HCT116 (cell line): ENCODE measurements at regions of chr6 and their contacts with region 1.

Region 1: GRCh38 chr6:25263657-25264056 is 15.5 kb upstream of the CARMIL1 start:
- DNase-seq: no peak
- ATAC-seq: no peak
- H3K4me3 ChIP-seq: no peak overlapping the region
- H3K27ac ChIP-seq: no peak overlapping the region
- H3K4me1 ChIP-seq: no peaks in the 10 kb centered on the region
- H3K27me3 ChIP-seq: no peaks in the 10 kb centered on the region
- CTCF ChIP-seq: no peak
- POLR2A ChIP-seq: no peak
- RAD21 ChIP-seq: no peak

Region 2: DNA sequence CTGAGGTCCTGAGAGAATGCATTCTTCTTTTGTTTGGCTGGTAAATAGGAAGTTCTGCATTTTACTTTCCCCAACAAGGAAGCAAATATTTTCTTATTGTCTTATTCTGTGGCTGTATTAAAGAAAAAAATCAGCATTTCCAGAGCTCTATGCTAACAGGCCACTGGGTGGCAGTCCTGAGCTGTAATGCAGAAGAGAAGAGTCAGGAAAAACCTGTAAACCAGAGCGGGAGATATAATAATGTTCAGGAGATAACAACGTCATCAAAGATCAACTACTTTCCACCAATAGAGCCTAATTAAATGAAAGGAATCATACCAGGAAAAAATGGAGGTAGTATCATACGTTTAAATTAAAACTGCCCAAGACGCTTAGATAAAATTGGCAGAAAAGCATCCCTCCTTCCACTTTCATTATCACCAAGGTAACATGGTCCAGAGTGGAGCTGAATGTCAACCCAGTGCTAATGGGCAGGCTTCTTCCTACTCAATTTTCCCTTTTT is 40.1 kb before region 1 on chr6:
- CTCF ChIA-PET with region 1: interaction called, 13 read pairs
- POLR2A ChIA-PET with region 1: no interaction called
- RAD21 ChIA-PET with region 1: interaction called, 3 to 6 read pairs
- intact Hi-C with region 1: no loop called
- DNase-seq: peak; percentile 61
- ATAC-seq: peak; percentile 80
- H3K4me3 ChIP-seq: peak overlapping the region; percentile 18 to 23; a peak in 3 of 4 replicates
- H3K27ac ChIP-seq: no peak overlapping the region
- H3K4me1 ChIP-seq: no peaks in the 10 kb centered on the region; a peak in 1 of 4 replicates
- H3K27me3 ChIP-seq: no peaks in the 10 kb centered on the region
- CTCF ChIP-seq: peak; percentile 76 to 95 (median 89)
- POLR2A ChIP-seq: no peak
- RAD21 ChIP-seq: peak; percentile 93

Region 3: DNA sequence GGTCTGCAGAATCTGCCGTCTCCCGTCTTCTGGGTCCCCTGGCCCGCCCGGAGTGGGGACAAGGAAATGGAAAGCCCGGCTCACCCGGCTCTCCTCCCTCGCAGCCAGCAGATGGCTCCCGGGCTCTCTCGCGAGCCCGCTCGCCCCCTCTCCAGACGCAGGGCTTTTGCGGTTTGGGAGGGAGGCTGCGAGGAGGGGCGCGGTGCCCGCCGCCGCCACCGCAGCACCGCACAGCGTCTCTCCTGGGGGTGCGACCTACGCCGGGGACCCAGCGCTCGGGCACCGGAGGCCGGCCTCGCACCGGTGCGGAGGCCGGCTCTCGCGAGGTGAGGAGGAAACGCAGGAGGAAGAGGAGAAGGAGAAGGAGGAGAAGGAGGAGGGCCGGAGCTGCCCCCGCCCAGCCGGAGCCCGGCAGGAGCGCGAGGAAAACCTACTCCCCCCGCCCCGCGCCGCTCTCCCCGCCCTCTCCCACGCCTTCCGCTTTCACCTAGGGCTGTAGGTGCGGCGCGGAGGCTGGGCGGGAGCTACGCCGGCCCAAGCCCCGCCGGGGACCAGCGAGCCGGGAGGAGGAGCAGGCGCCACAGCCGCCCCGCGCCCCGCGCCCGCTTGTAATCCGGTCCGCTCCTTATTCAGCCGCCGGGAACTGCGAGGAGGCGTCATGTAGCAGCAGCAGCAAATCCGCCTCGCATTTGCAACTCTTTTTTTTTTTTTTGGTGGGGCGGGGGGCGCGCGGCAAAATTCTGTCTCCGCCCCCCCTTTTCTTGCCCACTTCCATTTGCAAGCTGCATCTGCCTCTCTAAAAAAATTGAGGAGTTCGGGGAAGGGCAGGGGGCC is 15.5 kb after region 1 on chr6 and contains the start of gene CARMIL1:
- CTCF ChIA-PET with region 1: interaction called, 19 read pairs
- POLR2A ChIA-PET with region 1: interaction called, 3 read pairs
- RAD21 ChIA-PET with region 1: interaction called, 3 to 5 read pairs
- intact Hi-C with region 1: no loop called
- DNase-seq: peak; percentile 73
- ATAC-seq: peak; percentile 91
- H3K4me3 ChIP-seq: peak within 1 kb of the TSS; percentile 72 to 87
- H3K27ac ChIP-seq: peak within 1 kb of the TSS; percentile 65
- H3K4me1 ChIP-seq: peaks cover 13 to 24% of the 10 kb centered on the region in 2 experiments
- H3K27me3 ChIP-seq: no peaks in the 10 kb centered on the region
- CTCF ChIP-seq: peak; percentile 51 to 83 (median 56); a peak in 4 of 6 replicates
- POLR2A ChIP-seq: peak; percentile 58
- RAD21 ChIP-seq: peak; percentile 86
- total RNA-seq, gene CARMIL1: 21.7 TPM

Region 4: GRCh38 chr6:25490018-25490801 is 226.6 kb after region 1 on chr6:
- CTCF ChIA-PET with region 1: interaction called, 42 read pairs
- POLR2A ChIA-PET with region 1: interaction called, 4 read pairs
- RAD21 ChIA-PET with region 1: interaction called, 6 to 9 read pairs
- intact Hi-C with region 1: loop called (anchors 1 kb)
- DNase-seq: peak; percentile 69
- ATAC-seq: peak; percentile 98
- H3K4me3 ChIP-seq: no peak overlapping the region
- H3K27ac ChIP-seq: no peak overlapping the region
- H3K4me1 ChIP-seq: peaks cover 0 to 16% of the 10 kb centered on the region in 2 experiments; a peak in 1 of 4 replicates
- H3K27me3 ChIP-seq: no peaks in the 10 kb centered on the region
- CTCF ChIP-seq: peak; percentile 83 to 84 (median 84)
- POLR2A ChIP-seq: no peak
- RAD21 ChIP-seq: peak; percentile 88

Region 5: GRCh38 chr6:25556516-25556915 is 292.9 kb after region 1 on chr6:
- CTCF ChIA-PET with region 1: interaction called, 31 read pairs
- POLR2A ChIA-PET with region 1: no interaction called
- RAD21 ChIA-PET with region 1: interaction called in 1 of 2 experiments, 3 read pairs
- intact Hi-C with region 1: loop called (anchors 1 kb)
- DNase-seq: peak; percentile 71
- ATAC-seq: peak; percentile 87
- H3K4me3 ChIP-seq: no peak overlapping the region
- H3K27ac ChIP-seq: no peak overlapping the region
- H3K4me1 ChIP-seq: no peaks in the 10 kb centered on the region
- H3K27me3 ChIP-seq: no peaks in the 10 kb centered on the region
- CTCF ChIP-seq: peak; percentile 56 to 89 (median 79)
- POLR2A ChIP-seq: no peak
- RAD21 ChIP-seq: peak; percentile 65

Region 6: DNA sequence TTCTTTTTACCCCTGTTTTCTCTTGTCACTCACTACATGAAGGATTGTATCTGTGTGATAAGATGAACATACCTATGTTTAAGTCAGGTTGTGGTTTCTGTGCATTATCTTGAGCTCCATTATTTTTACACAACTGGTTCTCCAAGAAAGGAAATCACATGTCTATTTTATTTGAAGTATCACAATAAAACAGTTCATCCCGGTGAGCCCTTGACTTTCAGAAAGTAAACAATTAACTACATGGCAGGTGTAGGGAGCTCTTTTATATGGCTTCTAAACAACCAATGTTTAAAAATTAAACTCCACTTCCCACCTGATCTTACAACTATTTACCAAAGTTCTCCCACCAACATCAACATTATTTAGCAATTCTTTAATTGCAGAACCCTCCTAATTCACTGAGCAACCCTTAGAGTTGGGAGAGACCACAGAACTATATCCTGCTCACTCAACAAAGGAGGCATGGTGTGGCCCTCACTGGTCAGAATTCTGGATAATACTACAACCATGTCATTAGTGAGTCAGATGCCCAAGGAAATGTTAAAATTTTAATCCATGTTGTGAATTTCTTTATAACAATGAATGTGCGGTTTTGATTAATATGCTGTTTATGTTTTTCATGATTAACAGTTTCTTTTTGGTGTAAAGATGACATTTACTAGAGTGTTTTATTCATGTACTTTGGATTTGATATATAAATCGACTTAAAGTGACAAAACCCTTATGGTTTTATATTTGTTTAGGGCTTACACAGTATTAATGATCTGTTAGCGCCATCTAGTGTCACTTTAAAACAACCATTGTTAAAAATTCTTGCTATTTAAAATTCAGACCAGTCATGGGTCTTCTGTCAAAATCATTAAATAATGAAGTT is 338.4 kb after region 1 on chr6:
- CTCF ChIA-PET with region 1: interaction called, 9 read pairs
- POLR2A ChIA-PET with region 1: no interaction called
- RAD21 ChIA-PET with region 1: no interaction called
- intact Hi-C with region 1: loop called (anchors 1 kb)
- DNase-seq: peak; percentile 28
- ATAC-seq: no peak; the same call in 1 of the 2 replicates
- H3K4me3 ChIP-seq: no peak overlapping the region
- H3K27ac ChIP-seq: no peak overlapping the region
- H3K4me1 ChIP-seq: no peaks in the 10 kb centered on the region
- H3K27me3 ChIP-seq: no peaks in the 10 kb centered on the region
- CTCF ChIP-seq: peak; percentile 28 to 75 (median 67); a peak in 4 of 6 replicates
- POLR2A ChIP-seq: no peak
- RAD21 ChIP-seq: peak; percentile 74

Region 7: DNA sequence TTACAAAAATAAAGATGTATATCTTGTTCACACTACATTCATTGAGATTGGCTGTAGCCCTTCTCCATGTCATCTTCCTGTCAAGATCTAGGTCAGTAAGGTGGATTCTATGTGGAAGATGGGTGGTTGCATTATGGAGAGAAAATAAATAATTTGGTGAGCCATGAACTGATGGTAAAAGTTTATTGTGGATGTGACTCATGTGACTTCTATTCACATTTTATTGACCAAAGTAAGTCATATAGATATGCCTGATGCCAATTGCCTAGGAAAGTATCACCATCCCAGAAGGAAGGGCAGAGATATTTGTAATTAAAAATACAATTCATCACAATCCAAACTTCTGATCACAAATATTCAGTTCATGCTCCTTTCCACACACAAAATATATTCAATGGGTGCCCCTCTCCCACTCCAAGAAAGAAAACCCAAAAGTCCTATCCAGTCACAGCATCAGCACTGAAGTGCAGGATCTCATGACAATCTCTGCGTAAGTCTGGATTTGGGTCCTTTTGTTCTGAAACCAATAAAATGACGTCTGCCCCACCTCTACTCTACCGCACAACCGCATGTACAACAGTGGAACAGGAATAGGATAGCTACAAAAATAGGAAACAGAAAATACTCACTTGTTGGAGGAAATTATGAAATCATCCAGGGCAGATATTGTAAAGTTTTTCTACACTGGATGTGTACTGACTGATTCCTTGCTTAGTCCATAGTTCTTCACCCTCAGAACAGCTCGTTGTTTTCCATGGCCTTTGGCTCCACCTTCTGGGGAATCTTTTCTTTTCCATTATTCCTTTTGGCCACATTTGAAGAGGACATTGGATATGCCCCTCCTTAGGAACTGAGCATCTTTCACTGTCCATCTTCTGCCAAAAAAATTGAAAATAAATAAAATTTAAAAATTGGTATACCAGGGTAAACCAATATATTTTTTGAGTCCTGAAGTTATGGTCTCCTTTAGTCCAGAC is 626.5 kb after region 1 on chr6:
- CTCF ChIA-PET with region 1: interaction called, 5 read pairs
- POLR2A ChIA-PET with region 1: no interaction called
- RAD21 ChIA-PET with region 1: no interaction called
- intact Hi-C with region 1: loop called (anchors 5 kb)
- DNase-seq: peak; percentile 27
- ATAC-seq: peak; percentile 91
- H3K4me3 ChIP-seq: no peak overlapping the region
- H3K27ac ChIP-seq: no peak overlapping the region
- H3K4me1 ChIP-seq: no peaks in the 10 kb centered on the region
- H3K27me3 ChIP-seq: no peaks in the 10 kb centered on the region
- CTCF ChIP-seq: peak; percentile 31 to 67 (median 59); a peak in 5 of 6 replicates
- POLR2A ChIP-seq: no peak
- RAD21 ChIP-seq: peak; percentile 86